Endothelial cell of umbilical vein (primary cell): ENCODE measurements at regions of chr16 and their contacts with region 1.

Region 1: DNA sequence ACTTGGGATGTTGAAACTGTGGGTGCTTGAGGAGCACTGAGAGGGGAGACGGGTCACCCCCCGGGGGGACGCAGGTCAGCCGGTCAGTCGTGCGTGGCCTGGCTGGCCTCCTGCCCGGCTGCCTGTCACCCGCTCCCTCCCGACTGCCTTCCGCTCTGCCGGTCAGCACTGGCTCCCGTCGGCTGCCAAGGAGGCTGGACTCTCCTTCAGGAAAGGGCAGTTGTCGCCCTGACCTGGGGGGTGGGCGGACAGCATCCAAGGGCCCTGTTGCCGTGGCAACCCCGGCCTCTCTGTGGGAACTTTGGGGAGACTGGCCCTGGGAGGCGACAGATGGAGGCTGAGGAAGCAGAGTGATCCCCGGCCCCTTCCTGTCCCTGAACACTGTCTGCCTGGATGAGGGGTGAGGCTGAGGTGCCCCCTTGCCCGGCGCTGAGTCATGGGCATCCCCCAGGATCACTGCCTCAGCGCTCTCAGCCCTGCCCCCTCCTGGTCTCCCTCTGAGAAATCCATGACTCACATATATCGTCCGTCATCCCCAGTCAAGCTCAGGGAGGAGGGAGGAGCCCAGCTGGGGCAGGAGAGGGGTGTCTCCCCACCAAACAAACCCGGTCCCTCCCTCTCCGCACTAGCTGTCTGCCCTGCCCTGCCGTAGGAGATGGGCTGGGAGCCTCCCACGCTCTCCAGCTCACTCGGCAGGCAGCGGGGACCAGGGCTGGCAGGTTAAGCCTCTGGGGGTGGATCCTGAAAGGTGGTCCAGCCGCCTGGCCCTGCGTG is at the start of gene ADGRG1:
- DNase-seq: peak; percentile 95
- H3K4me3 ChIP-seq: peak within 1 kb of the TSS; percentile 7 to 48 (median 45)
- H3K27ac ChIP-seq: peak within 1 kb of the TSS; percentile 88
- H3K4me1 ChIP-seq: peaks cover 43% of the 10 kb centered on the region
- H3K27me3 ChIP-seq: no peaks in the 10 kb centered on the region
- CTCF ChIP-seq: peak in 1 of 2 donors; percentile 13
- POLR2A ChIP-seq: no peak
- total RNA-seq, gene ADGRG1: 92.5 and 116 TPM in 2 replicates

Region 2: DNA sequence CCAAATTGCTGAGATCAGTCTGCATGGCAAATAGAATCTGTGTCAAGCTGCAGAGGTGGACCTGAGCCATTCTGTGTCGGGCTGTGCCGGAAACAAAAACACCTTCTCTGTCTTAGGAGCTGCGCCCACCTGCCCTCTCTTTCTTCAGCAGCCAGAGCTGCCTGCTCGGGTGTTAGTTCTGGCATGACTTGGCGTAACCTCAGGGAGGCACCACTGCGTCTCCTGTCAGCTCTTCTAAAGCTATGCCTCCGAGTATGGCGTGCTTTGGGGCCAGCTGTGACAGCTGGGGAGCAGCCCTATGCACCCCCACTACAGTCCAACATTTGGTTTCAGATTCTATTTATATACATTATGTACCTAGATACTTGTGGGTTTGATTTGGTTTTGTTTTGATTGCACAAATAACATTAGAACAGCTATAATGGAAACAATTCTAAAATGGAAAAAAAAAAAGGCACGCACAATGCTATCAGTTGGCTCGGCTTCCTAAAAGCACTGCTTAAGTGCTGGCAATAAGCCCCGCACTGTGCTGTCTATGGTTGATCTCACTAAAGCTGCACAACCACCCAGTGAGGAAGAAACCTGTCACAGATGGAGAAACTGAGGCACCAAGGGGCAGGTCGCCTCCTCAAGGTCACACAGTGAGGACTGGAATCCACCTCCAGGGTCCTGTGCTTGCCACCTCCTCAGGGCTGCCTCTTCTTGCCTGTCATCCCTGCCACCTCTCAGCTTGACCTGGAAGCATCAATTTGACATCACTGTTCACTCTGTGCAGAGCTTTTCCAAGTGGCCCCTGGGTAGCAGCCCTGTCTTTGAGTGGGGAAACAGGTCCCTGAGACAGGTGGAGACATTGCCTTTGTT is 18.4 kb before region 1 on chr16:
- CTCF ChIA-PET with region 1: interaction called, 10 read pairs
- POLR2A ChIA-PET with region 1: interaction called, 3 read pairs
- dilution Hi-C with region 1: no loop called
- intact Hi-C with region 1: no loop called
- DNase-seq: peak; percentile 53
- H3K4me3 ChIP-seq: no peak overlapping the region
- H3K27ac ChIP-seq: no peak overlapping the region
- H3K4me1 ChIP-seq: no peaks in the 10 kb centered on the region
- H3K27me3 ChIP-seq: no peaks in the 10 kb centered on the region
- CTCF ChIP-seq: peak in 1 of 2 donors; percentile 36
- POLR2A ChIP-seq: no peak

Region 3: GRCh38 chr16:57639172-57639887 is 11.1 kb after region 1 on chr16:
- CTCF ChIA-PET with region 1: interaction called, 28 read pairs
- POLR2A ChIA-PET with region 1: interaction called, 9 read pairs
- dilution Hi-C with region 1: no loop called
- intact Hi-C with region 1: loop called (anchors 1 kb)
- DNase-seq: no peak
- H3K4me3 ChIP-seq: no peak overlapping the region
- H3K27ac ChIP-seq: no peak overlapping the region
- H3K4me1 ChIP-seq: peaks cover 36% of the 10 kb centered on the region
- H3K27me3 ChIP-seq: no peaks in the 10 kb centered on the region
- CTCF ChIP-seq: no peak
- POLR2A ChIP-seq: no peak

Region 4: DNA sequence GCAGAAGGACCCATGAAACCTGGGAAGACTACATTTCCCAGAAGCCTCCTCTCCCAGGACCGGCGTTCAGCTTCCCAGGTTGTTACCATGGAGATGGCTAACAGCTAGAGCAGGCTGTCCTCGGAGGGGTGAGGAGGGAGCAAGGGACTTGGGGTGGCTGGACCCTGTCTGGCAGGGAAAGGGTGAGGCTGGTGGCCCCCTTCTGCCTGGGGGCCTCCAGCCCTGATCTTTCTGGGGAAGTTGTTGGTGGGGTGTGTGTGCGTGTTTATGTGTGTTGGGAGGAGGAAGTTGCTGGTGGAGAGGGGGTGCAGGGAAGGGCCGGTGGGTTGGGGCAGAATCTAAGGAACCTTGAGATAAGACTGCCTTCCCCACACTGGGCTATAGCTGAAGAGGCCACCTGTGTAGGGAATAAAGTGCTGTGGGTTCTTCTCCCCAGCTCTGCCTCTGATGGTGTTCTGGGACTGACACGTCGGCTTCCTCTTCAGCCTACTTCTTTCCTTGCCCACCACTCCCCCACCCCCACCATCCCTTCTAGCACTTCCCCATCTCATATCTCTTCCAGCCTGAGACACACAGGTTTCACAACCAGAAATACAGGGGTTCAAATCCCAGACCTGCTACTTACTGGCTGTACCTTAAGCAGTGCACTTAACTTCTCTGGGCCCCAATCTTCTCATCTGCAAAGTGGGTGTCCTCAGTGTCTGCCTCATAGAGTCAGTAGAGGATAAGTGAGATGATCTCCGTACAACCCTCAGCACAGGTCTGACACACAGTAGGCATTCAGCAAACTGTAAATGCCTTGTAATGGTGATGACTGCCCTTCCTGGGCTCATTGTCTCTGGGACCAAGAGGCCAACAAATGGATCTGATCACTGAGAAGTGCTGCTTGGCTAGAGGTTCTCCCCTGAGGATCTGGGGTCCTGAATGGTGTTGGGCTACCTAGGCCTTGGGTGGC is 66.8 kb after region 1 on chr16 and contains the start of gene DRC7:
- CTCF ChIA-PET with region 1: no interaction called
- POLR2A ChIA-PET with region 1: no interaction called
- dilution Hi-C with region 1: no loop called
- intact Hi-C with region 1: no loop called
- DNase-seq: peak; percentile 65
- H3K4me3 ChIP-seq: peak within 1 kb of the TSS in 2 of 3 experiments; percentile 17 to 21
- H3K27ac ChIP-seq: no peak within 1 kb of the TSS
- H3K4me1 ChIP-seq: no peaks in the 10 kb centered on the region
- H3K27me3 ChIP-seq: peaks cover 2 to 5% of the 10 kb centered on the region in 2 experiments
- CTCF ChIP-seq: no peak
- POLR2A ChIP-seq: no peak
- total RNA-seq, gene DRC7: 0.13 TPM in 1 of 2 replicates, not detected in the other